Breast epithelium (tissue), 4 donors: ENCODE measurements at regions of chr9 and their contacts with region 1.

Region 1: GRCh38 chr9:130213903-130214761 is 41.9 kb downstream of the NCS1 start:
- DNase-seq: no peak
- H3K4me3 ChIP-seq: no peak overlapping the region
- H3K27ac ChIP-seq: no peak overlapping the region
- H3K4me1 ChIP-seq: no peaks in the 10 kb centered on the region
- H3K27me3 ChIP-seq: no peaks in the 10 kb centered on the region
- CTCF ChIP-seq: no peak
- POLR2A ChIP-seq: no peak

Region 2: DNA sequence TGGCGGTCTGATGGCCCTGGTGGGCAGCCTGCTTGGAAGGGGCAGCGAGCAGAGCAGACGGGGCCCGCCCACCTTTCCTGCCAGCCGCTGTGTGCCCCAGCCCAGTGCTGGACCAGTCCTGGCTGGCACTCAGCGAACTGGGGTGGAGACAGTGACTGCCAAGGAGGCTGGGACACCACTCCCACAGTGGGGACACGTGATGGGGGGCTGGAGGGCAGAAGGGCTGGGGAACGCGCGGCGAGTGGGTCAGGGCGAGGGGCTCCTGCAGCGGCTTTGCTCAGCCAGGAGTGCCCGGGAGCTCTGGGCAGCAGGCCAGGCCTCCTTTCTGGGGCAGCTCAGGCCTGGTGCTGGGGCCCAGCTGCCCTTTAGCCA is 22.4 kb before region 1 on chr9:
- intact Hi-C with region 1: loop called (anchors 1 kb)
- DNase-seq: no peak
- H3K4me3 ChIP-seq: no peak overlapping the region
- H3K27ac ChIP-seq: no peak overlapping the region
- H3K4me1 ChIP-seq: peaks cover 0 to under 1% of the 10 kb centered on the region in 2 donors
- H3K27me3 ChIP-seq: no peaks in the 10 kb centered on the region
- CTCF ChIP-seq: no peak
- POLR2A ChIP-seq: no peak